Endothelial cell of umbilical vein (primary cell): ENCODE measurements at regions of chr2 and their contacts with region 1.

Region 1: GRCh38 chr2:165953655-165954606 is at the start of gene TTC21B:
- DNase-seq: peak; percentile 97
- H3K4me3 ChIP-seq: peak within 1 kb of the TSS; percentile 60 to 99 (median 93)
- H3K27ac ChIP-seq: peak within 1 kb of the TSS; percentile 81
- H3K4me1 ChIP-seq: peaks cover 17% of the 10 kb centered on the region
- H3K27me3 ChIP-seq: no peaks in the 10 kb centered on the region
- CTCF ChIP-seq: peak; percentile 76 to 78
- POLR2A ChIP-seq: peak; percentile 75
- total RNA-seq, gene TTC21B: 18.0 and 21.9 TPM in 2 replicates

Region 2: GRCh38 chr2:165401285-165401852 is 552.6 kb before region 1 on chr2:
- CTCF ChIA-PET with region 1: no interaction called
- POLR2A ChIA-PET with region 1: no interaction called
- dilution Hi-C with region 1: no loop called
- intact Hi-C with region 1: loop called (anchors 2 kb)
- DNase-seq: peak; percentile 77
- H3K4me3 ChIP-seq: no peak overlapping the region
- H3K27ac ChIP-seq: no peak overlapping the region
- H3K4me1 ChIP-seq: no peaks in the 10 kb centered on the region
- H3K27me3 ChIP-seq: peaks cover 22 to 30% of the 10 kb centered on the region in 2 experiments
- CTCF ChIP-seq: peak; percentile 43 to 46
- POLR2A ChIP-seq: no peak

Region 3: GRCh38 chr2:165594935-165595255 is 359.0 kb before region 1 on chr2:
- CTCF ChIA-PET with region 1: no interaction called
- POLR2A ChIA-PET with region 1: no interaction called
- dilution Hi-C with region 1: no loop called
- intact Hi-C with region 1: no loop called
- DNase-seq: no peak
- H3K4me3 ChIP-seq: no peak overlapping the region
- H3K27ac ChIP-seq: no peak overlapping the region
- H3K4me1 ChIP-seq: no peaks in the 10 kb centered on the region
- H3K27me3 ChIP-seq: no peaks in the 10 kb centered on the region
- CTCF ChIP-seq: no peak
- POLR2A ChIP-seq: no peak

Region 4: DNA sequence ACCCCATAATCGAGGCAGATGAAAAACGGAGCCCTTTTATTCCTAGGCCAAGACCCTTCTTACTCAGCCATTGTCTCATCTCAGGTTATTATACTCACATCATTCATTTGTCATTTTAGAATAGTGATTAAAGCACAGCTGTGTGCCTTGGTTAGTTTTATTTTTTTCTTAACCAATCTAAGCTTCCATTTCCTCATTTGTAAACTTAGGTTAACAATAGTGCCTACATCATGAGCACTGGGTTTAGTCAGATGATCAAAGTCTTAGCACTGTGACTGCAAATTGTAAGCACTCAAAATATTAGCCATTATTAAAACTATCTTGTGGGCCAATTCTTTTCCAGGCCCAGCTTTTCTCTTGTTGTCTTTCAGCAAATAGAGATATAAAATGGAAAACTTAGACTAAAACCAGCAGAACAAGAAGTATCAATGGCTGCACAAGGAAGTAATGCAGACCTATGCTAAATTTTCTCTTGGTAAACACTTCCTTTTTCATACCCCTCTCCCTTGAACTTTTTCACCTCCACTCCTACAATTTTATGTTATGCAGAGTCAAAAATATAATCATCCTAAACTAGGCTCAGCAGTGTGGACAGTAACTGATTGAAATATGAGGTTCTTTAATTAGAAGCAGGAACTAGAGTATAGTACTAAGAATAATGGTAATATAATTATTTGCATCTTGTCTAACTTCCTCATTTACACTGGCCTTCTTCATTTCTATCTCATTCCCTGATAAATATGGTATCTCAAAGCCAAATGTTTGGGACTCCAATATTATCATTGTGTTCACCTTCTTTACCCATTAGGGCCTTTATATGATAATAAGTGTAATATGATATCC is 138.4 kb before region 1 on chr2:
- CTCF ChIA-PET with region 1: no interaction called
- POLR2A ChIA-PET with region 1: no interaction called
- dilution Hi-C with region 1: no loop called
- intact Hi-C with region 1: no loop called
- DNase-seq: no peak
- H3K4me3 ChIP-seq: no peak overlapping the region
- H3K27ac ChIP-seq: no peak overlapping the region
- H3K4me1 ChIP-seq: no peaks in the 10 kb centered on the region
- H3K27me3 ChIP-seq: peaks cover 0 to 6% of the 10 kb centered on the region in 2 experiments
- CTCF ChIP-seq: no peak
- POLR2A ChIP-seq: no peak

Region 5: GRCh38 chr2:166057370-166058164 is 103.6 kb after region 1 on chr2:
- CTCF ChIA-PET with region 1: interaction called, 18 read pairs
- POLR2A ChIA-PET with region 1: no interaction called
- dilution Hi-C with region 1: no loop called
- intact Hi-C with region 1: loop called (anchors 1 kb)
- DNase-seq: peak; percentile 85
- H3K4me3 ChIP-seq: peak overlapping the region in 1 of 3 experiments; percentile 32
- H3K27ac ChIP-seq: peak overlapping the region; percentile 51
- H3K4me1 ChIP-seq: peaks cover 18% of the 10 kb centered on the region
- H3K27me3 ChIP-seq: no peaks in the 10 kb centered on the region
- CTCF ChIP-seq: peak; percentile 10 to 25
- POLR2A ChIP-seq: no peak

Region 6: GRCh38 chr2:166180951-166181812 is 227.3 kb after region 1 on chr2:
- CTCF ChIA-PET with region 1: interaction called, 20 read pairs
- POLR2A ChIA-PET with region 1: no interaction called
- dilution Hi-C with region 1: no loop called
- intact Hi-C with region 1: loop called (anchors 1 kb)
- DNase-seq: peak; percentile 65
- H3K4me3 ChIP-seq: no peak overlapping the region
- H3K27ac ChIP-seq: no peak overlapping the region
- H3K4me1 ChIP-seq: no peaks in the 10 kb centered on the region
- H3K27me3 ChIP-seq: peaks cover 0 to 1% of the 10 kb centered on the region in 2 experiments
- CTCF ChIP-seq: peak; percentile 42 to 57
- POLR2A ChIP-seq: no peak

Region 7: GRCh38 chr2:166384774-166385173 is 430.8 kb after region 1 on chr2:
- CTCF ChIA-PET with region 1: no interaction called
- POLR2A ChIA-PET with region 1: no interaction called
- dilution Hi-C with region 1: no loop called
- intact Hi-C with region 1: loop called (anchors 2 kb)
- DNase-seq: peak; percentile 58
- H3K4me3 ChIP-seq: no peak overlapping the region
- H3K27ac ChIP-seq: no peak overlapping the region
- H3K4me1 ChIP-seq: peaks cover 14% of the 10 kb centered on the region
- H3K27me3 ChIP-seq: peaks cover 6 to 10% of the 10 kb centered on the region in 2 experiments
- CTCF ChIP-seq: peak; percentile 32 to 37
- POLR2A ChIP-seq: no peak

Region 8: GRCh38 chr2:167869200-167869599 is 1915.3 kb after region 1 on chr2:
- CTCF ChIA-PET with region 1: no interaction called
- POLR2A ChIA-PET with region 1: no interaction called
- dilution Hi-C with region 1: no loop called
- intact Hi-C with region 1: no loop called
- DNase-seq: no peak
- H3K4me3 ChIP-seq: no peak overlapping the region
- H3K27ac ChIP-seq: no peak overlapping the region
- H3K4me1 ChIP-seq: no peaks in the 10 kb centered on the region
- H3K27me3 ChIP-seq: no peaks in the 10 kb centered on the region
- CTCF ChIP-seq: no peak
- POLR2A ChIP-seq: no peak